T-cell (primary cell): ENCODE measurements at regions of chr6 and their contacts with region 1.

Region 1: GRCh38 chr6:120916844-120917243 is 417.4 kb downstream of the TBC1D32 start:
- DNase-seq: no peak
- ATAC-seq: no peak
- H3K4me3 ChIP-seq: no peak overlapping the region
- H3K4me3 Mint-ChIP-seq: no peak overlapping the region
- H3K27ac ChIP-seq: no peak overlapping the region
- H3K27ac Mint-ChIP-seq: no peak overlapping the region
- H3K4me1 ChIP-seq: no peaks in the 10 kb centered on the region
- H3K4me1 Mint-ChIP-seq: peaks cover 0 to 2% (median 0%) of the 10 kb centered on the region in 3 donors
- H3K27me3 ChIP-seq: no peaks in the 10 kb centered on the region
- H3K27me3 Mint-ChIP-seq: no peaks in the 10 kb centered on the region

Region 2: GRCh38 chr6:120083186-120083585 is 833.7 kb before region 1 on chr6:
- CTCF ChIA-PET with region 1: no interaction called
- POLR2A ChIA-PET with region 1: interaction called in 1 of 2 experiments, 11 read pairs
- DNase-seq: no peak
- ATAC-seq: no peak
- H3K4me3 ChIP-seq: no peak overlapping the region
- H3K4me3 Mint-ChIP-seq: no peak overlapping the region
- H3K27ac ChIP-seq: no peak overlapping the region
- H3K27ac Mint-ChIP-seq: no peak overlapping the region
- H3K4me1 ChIP-seq: no peaks in the 10 kb centered on the region
- H3K4me1 Mint-ChIP-seq: no peaks in the 10 kb centered on the region
- H3K27me3 ChIP-seq: no peaks in the 10 kb centered on the region
- H3K27me3 Mint-ChIP-seq: peaks cover 0 to 4% of the 10 kb centered on the region in 2 donors

Region 3: GRCh38 chr6:120545353-120545752 is 371.5 kb before region 1 on chr6:
- CTCF ChIA-PET with region 1: no interaction called
- POLR2A ChIA-PET with region 1: no interaction called
- DNase-seq: no peak
- ATAC-seq: no peak
- H3K4me3 ChIP-seq: no peak overlapping the region
- H3K4me3 Mint-ChIP-seq: no peak overlapping the region
- H3K27ac ChIP-seq: no peak overlapping the region
- H3K27ac Mint-ChIP-seq: no peak overlapping the region
- H3K4me1 ChIP-seq: no peaks in the 10 kb centered on the region
- H3K4me1 Mint-ChIP-seq: no peaks in the 10 kb centered on the region
- H3K27me3 ChIP-seq: no peaks in the 10 kb centered on the region
- H3K27me3 Mint-ChIP-seq: no peaks in the 10 kb centered on the region

Region 4: GRCh38 chr6:121086876-121087275 is 170.0 kb after region 1 on chr6:
- CTCF ChIA-PET with region 1: no interaction called
- POLR2A ChIA-PET with region 1: no interaction called
- DNase-seq: no peak
- ATAC-seq: no peak
- H3K4me3 ChIP-seq: no peak overlapping the region
- H3K4me3 Mint-ChIP-seq: no peak overlapping the region
- H3K27ac ChIP-seq: no peak overlapping the region
- H3K27ac Mint-ChIP-seq: no peak overlapping the region
- H3K4me1 ChIP-seq: no peaks in the 10 kb centered on the region
- H3K4me1 Mint-ChIP-seq: no peaks in the 10 kb centered on the region
- H3K27me3 ChIP-seq: no peaks in the 10 kb centered on the region
- H3K27me3 Mint-ChIP-seq: no peaks in the 10 kb centered on the region